Activated CD4-positive, alpha-beta memory T cell treated with anti-CD3 and anti-CD28 coated beads, Interleukin-2, amount 10 ng/mL, durations not matched to agents 7 days and 5 days (primary cell): ENCODE measurements at regions of chr17 and their contacts with region 1.

Region 1: GRCh38 chr17:65100316-65101140 is 36.6 kb upstream of the RGS9 start:
- DNase-seq: peak; percentile 87
- H3K4me3 Mint-ChIP-seq: peak overlapping the region; percentile 78
- H3K27ac Mint-ChIP-seq: peak overlapping the region; percentile 95
- H3K4me1 Mint-ChIP-seq: peaks cover 39% of the 10 kb centered on the region
- H3K27me3 Mint-ChIP-seq: peaks cover 2% of the 10 kb centered on the region

Region 2: DNA sequence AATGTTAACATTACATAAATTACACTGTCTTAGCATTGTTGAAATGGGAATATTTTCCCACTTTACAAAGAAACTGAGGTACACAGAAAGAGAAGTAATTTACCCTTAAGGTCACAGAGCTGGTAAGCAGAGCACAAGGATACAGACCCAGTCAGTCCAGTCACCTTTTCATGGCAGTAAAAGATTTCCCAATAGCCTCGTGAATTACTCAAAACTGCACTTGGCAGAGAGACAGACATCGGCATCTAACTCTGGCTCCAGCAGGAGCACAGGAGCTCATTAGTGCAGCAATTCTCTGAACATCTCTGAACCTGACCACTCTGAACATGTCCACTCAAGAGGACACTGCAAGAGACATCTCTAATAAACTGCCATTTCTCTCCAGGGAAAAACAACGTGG is 840.6 kb before region 1 on chr17:
- CTCF ChIA-PET with region 1: no interaction called
- POLR2A ChIA-PET with region 1: no interaction called
- DNase-seq: no peak
- H3K4me3 Mint-ChIP-seq: no peak overlapping the region
- H3K27ac Mint-ChIP-seq: no peak overlapping the region
- H3K4me1 Mint-ChIP-seq: peaks cover 31% of the 10 kb centered on the region
- H3K27me3 Mint-ChIP-seq: no peaks in the 10 kb centered on the region

Region 3: DNA sequence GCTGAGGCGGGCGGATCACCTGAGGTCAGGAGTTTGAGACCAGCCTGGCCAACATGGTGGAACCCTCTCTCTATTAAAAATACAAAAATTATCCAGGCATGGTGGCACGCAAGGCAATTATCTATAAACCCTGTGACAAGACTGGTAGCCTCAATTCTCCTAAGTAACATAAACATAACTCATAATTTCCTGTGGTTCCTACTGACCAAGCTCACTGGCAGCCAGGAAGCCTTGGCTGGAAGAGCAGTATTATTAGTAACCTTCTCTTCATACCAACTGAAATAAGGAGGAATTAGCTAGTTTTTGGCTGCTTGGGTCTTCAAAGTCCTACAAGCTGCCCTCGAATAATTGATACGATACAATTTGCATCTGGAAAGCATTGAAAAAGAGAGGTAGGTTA is 149.7 kb before region 1 on chr17:
- CTCF ChIA-PET with region 1: no interaction called
- POLR2A ChIA-PET with region 1: no interaction called
- DNase-seq: no peak
- H3K4me3 Mint-ChIP-seq: no peak overlapping the region
- H3K27ac Mint-ChIP-seq: no peak overlapping the region
- H3K4me1 Mint-ChIP-seq: peaks cover 7% of the 10 kb centered on the region
- H3K27me3 Mint-ChIP-seq: no peaks in the 10 kb centered on the region

Region 4: GRCh38 chr17:64975329-64976087 is 125.0 kb before region 1 on chr17:
- CTCF ChIA-PET with region 1: interaction called, 14 read pairs
- POLR2A ChIA-PET with region 1: interaction called, 16 read pairs
- DNase-seq: peak; percentile 98
- H3K4me3 Mint-ChIP-seq: peak overlapping the region; percentile 84
- H3K27ac Mint-ChIP-seq: peak overlapping the region; percentile 94
- H3K4me1 Mint-ChIP-seq: peaks cover 59% of the 10 kb centered on the region
- H3K27me3 Mint-ChIP-seq: no peaks in the 10 kb centered on the region

Region 5: DNA sequence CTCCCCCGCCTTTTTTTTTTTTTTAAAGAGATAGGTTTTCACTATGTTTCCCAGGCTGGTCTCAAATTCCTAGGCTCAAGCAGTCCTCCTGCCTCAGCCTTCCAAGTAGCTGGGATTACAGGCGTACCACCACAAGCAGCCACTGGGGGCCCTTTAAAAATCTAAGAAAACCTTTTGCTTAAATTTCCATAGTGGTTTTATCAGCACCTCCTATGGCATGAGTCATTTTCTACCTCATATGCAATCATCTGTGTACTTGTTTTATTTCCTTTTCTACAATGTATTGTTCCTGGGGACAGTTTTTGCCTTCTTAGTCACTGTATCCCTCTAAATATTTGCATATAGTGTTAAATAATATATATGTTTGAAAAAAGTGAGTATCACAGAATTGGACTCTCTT is 73.2 kb before region 1 on chr17:
- CTCF ChIA-PET with region 1: interaction called, 4 read pairs
- POLR2A ChIA-PET with region 1: interaction called, 10 read pairs
- DNase-seq: peak; percentile 59
- H3K4me3 Mint-ChIP-seq: peak overlapping the region; percentile 63
- H3K27ac Mint-ChIP-seq: peak overlapping the region; percentile 85
- H3K4me1 Mint-ChIP-seq: peaks cover 84% of the 10 kb centered on the region
- H3K27me3 Mint-ChIP-seq: no peaks in the 10 kb centered on the region

Region 6: DNA sequence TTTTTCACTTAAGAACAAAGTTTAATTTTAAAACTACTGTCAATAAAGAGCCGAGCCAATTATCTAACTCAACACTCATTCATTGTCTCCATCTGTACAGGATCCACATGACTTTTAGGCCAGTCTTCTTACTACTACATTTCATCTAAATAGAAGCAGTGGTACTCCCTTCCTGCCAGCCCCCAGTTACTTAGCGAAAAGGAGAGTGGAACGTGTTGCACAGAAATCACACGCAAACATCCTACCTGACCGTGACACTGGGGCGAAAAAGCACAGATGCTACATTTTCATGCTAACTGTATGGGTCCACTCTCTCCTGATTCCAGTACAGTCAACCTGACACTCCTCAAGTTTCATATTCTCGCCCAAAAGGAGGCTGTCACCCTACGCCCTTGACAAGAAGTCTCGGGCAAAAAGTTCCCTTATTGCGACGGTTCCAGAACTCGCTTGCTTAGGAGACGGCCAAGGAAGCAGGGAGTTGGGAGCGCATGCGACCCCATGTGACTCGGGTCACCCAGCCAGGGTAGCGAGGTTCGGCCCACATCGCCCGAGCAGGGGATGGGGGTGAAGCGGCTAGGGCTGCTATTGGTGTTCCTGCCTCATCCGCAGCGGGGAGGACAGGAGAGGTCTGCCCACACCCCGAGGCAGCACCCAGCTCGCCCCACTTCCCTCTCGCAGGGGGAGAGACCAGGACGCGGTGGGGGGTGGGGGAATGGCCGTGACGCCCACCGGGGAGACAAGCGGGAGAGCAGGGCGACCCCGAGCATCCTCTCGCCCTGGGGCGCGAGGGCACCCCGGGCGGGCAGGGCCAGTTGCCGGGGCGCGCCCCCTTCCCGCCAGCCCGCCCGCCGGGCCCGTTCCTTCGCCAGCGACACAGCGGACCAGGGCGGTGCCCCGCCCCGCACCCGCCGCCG is 44.9 kb before region 1 on chr17:
- CTCF ChIA-PET with region 1: interaction called, 30 read pairs
- POLR2A ChIA-PET with region 1: interaction called, 27 read pairs
- DNase-seq: peak; percentile 57
- H3K4me3 Mint-ChIP-seq: peak overlapping the region; percentile 96
- H3K27ac Mint-ChIP-seq: peak overlapping the region; percentile 91
- H3K4me1 Mint-ChIP-seq: peaks cover 51% of the 10 kb centered on the region
- H3K27me3 Mint-ChIP-seq: peaks cover 2% of the 10 kb centered on the region

Region 7: GRCh38 chr17:65122836-65123756 is 22.6 kb after region 1 on chr17:
- CTCF ChIA-PET with region 1: interaction called, 29 read pairs
- POLR2A ChIA-PET with region 1: interaction called, 34 read pairs
- DNase-seq: peak; percentile 89
- H3K4me3 Mint-ChIP-seq: peak overlapping the region; percentile 75
- H3K27ac Mint-ChIP-seq: peak overlapping the region; percentile 97
- H3K4me1 Mint-ChIP-seq: peaks cover 48% of the 10 kb centered on the region
- H3K27me3 Mint-ChIP-seq: peaks cover 11% of the 10 kb centered on the region

Region 8: DNA sequence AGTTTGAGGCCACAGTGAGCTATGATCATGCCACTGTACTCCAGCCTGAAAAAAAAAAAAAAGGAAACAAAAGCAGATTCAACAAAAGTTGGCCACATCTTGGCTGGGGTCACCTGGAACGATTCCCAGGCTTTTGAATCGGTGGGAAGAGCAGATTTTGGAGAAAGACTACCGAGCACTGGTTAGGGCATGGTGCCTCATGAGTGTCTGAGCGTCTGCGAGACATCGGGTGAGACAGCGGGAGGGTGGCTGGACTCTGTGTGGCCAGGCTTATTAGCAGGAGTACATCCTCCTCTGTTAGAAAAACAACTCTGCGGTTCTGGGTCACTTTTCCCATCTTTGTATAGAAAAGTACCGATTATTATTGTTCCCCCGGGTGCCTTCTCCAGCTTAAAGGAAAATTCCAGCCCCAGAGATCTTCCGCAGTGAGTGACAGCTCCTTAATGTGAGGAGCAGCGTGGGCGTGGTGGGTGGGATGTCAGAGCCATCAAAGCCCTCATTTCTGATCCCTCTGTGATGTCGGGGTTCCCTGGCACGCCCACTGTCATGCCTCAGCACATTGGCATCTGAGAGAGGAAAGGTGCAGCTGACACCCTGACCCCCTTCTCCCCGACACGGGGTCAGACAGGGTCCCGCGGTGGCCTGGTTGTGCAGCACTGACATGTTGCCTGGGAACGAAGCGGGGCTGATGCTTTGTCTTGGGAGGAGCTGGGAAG is 43.5 kb after region 1 on chr17:
- CTCF ChIA-PET with region 1: interaction called, 69 read pairs
- POLR2A ChIA-PET with region 1: interaction called, 7 read pairs
- DNase-seq: no peak
- H3K4me3 Mint-ChIP-seq: no peak overlapping the region
- H3K27ac Mint-ChIP-seq: no peak overlapping the region
- H3K4me1 Mint-ChIP-seq: peaks cover 34% of the 10 kb centered on the region
- H3K27me3 Mint-ChIP-seq: peaks cover 3% of the 10 kb centered on the region

Region 9: DNA sequence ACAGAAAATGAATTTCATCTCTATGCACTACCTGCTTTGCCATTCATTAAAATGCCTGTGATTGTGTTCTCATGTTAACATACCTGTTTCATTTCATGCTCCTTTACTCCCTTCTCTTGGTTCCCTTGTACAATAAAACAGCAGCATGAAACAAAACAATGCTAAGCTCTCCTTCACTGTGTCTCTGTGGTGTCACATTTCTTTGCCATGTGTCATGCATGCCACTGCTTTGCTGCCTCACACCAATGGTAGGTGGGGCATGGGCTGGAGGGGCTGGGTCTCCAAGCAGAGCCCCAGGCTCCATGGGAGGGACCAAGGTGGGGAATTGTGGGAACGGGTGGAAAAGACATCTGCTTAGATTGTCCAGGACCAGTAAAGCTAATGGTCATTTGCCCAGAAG is 120.2 kb after region 1 on chr17:
- CTCF ChIA-PET with region 1: no interaction called
- POLR2A ChIA-PET with region 1: no interaction called
- DNase-seq: no peak
- H3K4me3 Mint-ChIP-seq: no peak overlapping the region
- H3K27ac Mint-ChIP-seq: no peak overlapping the region
- H3K4me1 Mint-ChIP-seq: no peaks in the 10 kb centered on the region
- H3K27me3 Mint-ChIP-seq: peaks cover 17% of the 10 kb centered on the region